Dendritic cell treated with granulocyte-macrophage colony-stimulating factor and Interleukin-4, amounts not matched to agents 40 ng/mL and 50 ng/mL, for 4 days (primary cell): ENCODE measurements at regions of chr12 and their contacts with region 1.

Region 1: GRCh38 chr12:62435303-62436163 is 31.1 kb upstream of the MON2 start:
- H3K4me3 Mint-ChIP-seq: peak overlapping the region; percentile 79
- H3K27ac Mint-ChIP-seq: peak overlapping the region; percentile 35
- H3K4me1 Mint-ChIP-seq: peaks cover 19% of the 10 kb centered on the region
- H3K27me3 Mint-ChIP-seq: peaks cover 28% of the 10 kb centered on the region

Region 2: GRCh38 chr12:62562846-62563245 is 127.3 kb after region 1 on chr12:
- intact Hi-C with region 1: loop called (anchors 10 kb)
- H3K4me3 Mint-ChIP-seq: no peak overlapping the region
- H3K27ac Mint-ChIP-seq: no peak overlapping the region
- H3K4me1 Mint-ChIP-seq: no peaks in the 10 kb centered on the region
- H3K27me3 Mint-ChIP-seq: no peaks in the 10 kb centered on the region

Region 3: DNA sequence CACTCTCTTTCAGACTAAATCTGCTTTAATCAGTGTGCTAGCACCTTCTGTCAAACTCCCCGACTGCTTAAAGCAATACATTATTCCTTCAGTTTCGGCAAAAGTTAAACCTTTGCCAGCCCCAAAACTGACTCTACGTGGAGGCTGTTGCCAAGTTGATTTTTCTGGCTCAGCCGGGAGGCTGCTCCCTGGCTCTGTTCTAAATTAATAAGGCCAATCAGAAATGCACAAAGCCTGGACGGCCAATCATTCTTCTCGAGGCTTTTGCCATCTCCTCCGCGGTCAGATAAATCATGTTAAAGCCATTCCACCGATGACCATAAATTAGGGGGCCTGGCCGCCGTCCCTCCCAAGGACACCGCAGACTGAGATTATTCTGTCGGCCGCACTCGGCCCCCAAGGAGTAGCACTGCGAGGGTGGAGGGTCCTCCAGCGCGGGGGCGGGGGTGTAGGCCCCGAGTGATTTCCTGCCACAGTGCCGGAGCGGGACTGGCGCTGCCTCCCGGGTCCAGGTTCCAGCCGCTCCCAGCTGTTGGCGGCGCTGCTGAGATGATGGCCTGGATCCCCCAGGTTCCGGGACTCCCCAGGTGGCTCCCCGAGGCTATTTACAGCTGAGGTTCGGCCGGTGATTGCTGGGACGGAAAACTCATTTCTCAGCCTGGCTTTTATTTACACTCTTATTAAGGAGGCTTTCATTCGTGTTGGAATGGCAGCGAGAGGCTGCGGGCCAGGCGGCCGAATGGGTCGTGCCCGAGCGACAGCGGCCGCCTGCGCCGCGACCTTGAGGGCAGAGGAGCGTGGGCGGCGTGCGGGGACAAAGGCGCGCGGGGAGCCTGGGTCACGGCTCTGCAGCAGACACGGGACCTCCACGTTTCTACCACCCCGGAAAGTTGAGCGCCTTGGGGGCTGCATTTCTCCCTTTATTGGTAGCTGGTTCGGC is 196.2 kb after region 1 on chr12:
- intact Hi-C with region 1: no loop called
- H3K4me3 Mint-ChIP-seq: peak overlapping the region; percentile 84
- H3K27ac Mint-ChIP-seq: peak overlapping the region; percentile 68
- H3K4me1 Mint-ChIP-seq: peaks cover 23% of the 10 kb centered on the region
- H3K27me3 Mint-ChIP-seq: peaks cover 57% of the 10 kb centered on the region

Region 4: DNA sequence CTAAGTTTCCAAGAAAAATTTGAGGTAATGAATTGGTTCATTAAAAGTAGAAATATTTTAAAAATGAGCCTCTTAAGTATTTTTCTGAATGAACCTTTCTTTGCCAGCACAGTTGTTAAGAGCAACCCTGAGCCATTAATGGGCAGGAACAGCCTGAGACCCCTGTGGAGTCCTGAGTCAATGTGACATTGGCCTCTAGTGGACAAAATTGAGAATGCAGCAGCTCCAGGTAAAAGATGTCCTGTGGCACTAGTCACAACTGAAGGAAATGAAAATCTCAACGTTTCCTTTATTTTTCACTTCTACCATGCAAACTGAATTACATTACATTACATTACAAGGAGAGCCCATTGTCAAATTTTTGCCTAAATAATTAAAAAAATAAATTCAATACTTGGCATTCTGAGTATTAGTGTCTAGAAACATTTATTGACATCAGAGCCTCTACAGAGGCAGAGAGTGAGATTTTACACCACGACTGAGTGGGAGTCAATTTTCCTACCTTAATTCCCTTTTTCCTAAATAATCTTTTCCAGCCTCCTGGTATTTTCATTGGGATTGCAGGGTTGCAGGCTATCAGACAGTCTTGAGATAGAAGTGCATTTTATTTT is 363.7 kb after region 1 on chr12:
- intact Hi-C with region 1: loop called (anchors 5 kb)
- H3K4me3 Mint-ChIP-seq: no peak overlapping the region
- H3K27ac Mint-ChIP-seq: no peak overlapping the region
- H3K4me1 Mint-ChIP-seq: no peaks in the 10 kb centered on the region
- H3K27me3 Mint-ChIP-seq: no peaks in the 10 kb centered on the region

Region 5: DNA sequence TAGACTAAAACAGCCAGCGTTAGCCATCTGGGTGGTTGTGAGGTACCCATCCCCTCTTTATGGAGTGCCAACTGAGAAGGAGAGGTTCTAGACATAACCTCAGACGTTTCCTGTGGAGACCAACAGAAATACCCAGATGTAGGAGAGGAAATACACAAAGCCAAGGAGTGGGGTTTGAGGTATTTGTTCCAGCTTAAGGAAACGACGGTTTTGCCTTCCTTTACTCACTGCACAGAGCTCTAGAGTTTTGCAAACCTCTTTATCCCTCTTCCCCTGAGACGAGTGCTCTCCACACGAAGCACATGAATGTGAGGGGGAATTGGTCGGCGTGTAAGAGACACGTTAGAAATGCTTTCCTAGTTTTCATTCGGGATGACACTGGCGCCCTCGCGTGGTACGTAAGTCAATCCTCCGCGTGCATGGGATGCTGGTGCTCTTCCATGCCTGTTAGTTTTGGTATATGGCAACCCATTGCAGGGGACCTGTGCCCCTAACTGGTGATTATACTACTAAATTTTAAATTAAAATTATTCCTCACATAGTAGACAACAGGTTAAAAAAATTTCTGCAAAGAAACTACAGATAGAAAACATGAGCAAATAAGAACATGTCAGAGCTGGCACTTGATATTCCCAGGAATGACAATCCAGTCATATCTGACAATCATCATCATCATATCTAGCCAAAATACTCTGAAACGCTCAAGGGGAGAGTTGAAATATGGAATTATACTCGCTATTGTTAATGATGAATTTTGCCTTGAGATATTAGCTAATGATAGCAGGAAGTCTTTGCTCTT is 377.7 kb after region 1 on chr12:
- intact Hi-C with region 1: loop called (anchors 5 kb)
- H3K4me3 Mint-ChIP-seq: peak overlapping the region; percentile 48
- H3K27ac Mint-ChIP-seq: no peak overlapping the region
- H3K4me1 Mint-ChIP-seq: peaks cover 19% of the 10 kb centered on the region
- H3K27me3 Mint-ChIP-seq: no peaks in the 10 kb centered on the region